Heart right ventricle (tissue), 16 donors: ENCODE measurements at regions of chr1 and their contacts with region 1.

Region 1: DNA sequence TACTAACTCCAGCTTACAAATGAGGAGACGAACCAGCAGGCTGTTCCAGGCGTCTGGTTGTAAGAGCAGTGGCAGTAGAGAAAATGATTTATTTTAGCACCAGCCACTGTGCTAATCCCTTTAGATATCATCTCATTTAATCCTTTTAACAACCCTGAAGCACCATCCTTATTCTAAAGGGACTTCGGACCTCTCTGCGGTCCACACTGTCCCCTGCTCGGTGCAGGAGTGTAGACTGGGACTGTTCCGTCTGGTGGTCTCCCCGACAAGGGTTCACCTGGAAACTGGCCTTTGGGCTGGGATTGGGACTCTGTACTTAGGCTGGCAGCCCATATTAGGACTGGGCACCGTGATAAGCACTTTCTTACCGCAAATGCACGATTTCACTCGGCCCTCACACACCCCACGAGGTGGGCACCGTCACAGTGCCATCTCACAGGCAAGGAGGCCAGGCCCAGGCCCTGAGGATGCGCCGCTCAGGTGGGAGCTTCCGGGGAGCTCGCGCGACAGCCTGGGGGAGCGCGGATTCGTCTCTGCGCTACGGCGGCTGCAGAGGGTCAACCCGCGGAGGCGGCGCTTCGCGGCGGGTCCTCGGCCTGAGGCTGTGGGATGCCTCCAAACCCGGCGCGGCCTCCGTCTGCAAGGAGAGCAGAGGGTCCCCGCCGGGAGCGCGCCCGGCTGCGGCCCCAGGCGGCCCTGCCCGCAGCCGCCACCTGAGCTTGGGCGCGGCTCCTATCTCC is 45.2 kb downstream of the ATP1A1 start:
- DNase-seq: peak; percentile 83 to 87
- ATAC-seq: peak; percentile 68 to 87 (median 78)
- H3K4me3 ChIP-seq: peak overlapping the region; percentile 57 to 90 (median 82)
- H3K27ac ChIP-seq: peak overlapping the region; percentile 28 to 92 (median 88)
- H3K4me1 ChIP-seq: peaks cover 5 to 47% (median 28%) of the 10 kb centered on the region in 9 donors
- H3K27me3 ChIP-seq: no peaks in the 10 kb centered on the region
- CTCF ChIP-seq: peak in 2 of 9 donors; percentile 5 to 11

Region 2: GRCh38 chr1:116151739-116152576 is 266.3 kb before region 1 on chr1:
- intact Hi-C with region 1: loop called in 1 of 10 experiments (anchors 5 kb)
- DNase-seq: peak; percentile 70 to 75
- ATAC-seq: peak; percentile 90 to 97 (median 96)
- H3K4me3 ChIP-seq: peak overlapping the region in 9 of 10 donors; percentile 42 to 60 (median 52)
- H3K27ac ChIP-seq: peak overlapping the region; percentile 43 to 85 (median 75)
- H3K4me1 ChIP-seq: peaks cover 5 to 30% (median 11%) of the 10 kb centered on the region in 9 donors
- H3K27me3 ChIP-seq: no peaks in the 10 kb centered on the region
- CTCF ChIP-seq: peak; percentile 87 to 99 (median 93)

Region 3: GRCh38 chr1:116377541-116378529 is 40.4 kb before region 1 on chr1:
- intact Hi-C with region 1: loop called in 7 of 10 experiments (anchors 5 kb)
- DNase-seq: peak; percentile 57 to 62
- ATAC-seq: peak in 7 of 8 donors; percentile 18 to 51 (median 47)
- H3K4me3 ChIP-seq: peak overlapping the region in 7 of 10 donors; percentile 3 to 88 (median 29)
- H3K27ac ChIP-seq: peak overlapping the region; percentile 91 to 98 (median 97)
- H3K4me1 ChIP-seq: peaks cover 28 to 92% (median 86%) of the 10 kb centered on the region in 9 donors
- H3K27me3 ChIP-seq: no peaks in the 10 kb centered on the region
- CTCF ChIP-seq: no peak

Region 4: DNA sequence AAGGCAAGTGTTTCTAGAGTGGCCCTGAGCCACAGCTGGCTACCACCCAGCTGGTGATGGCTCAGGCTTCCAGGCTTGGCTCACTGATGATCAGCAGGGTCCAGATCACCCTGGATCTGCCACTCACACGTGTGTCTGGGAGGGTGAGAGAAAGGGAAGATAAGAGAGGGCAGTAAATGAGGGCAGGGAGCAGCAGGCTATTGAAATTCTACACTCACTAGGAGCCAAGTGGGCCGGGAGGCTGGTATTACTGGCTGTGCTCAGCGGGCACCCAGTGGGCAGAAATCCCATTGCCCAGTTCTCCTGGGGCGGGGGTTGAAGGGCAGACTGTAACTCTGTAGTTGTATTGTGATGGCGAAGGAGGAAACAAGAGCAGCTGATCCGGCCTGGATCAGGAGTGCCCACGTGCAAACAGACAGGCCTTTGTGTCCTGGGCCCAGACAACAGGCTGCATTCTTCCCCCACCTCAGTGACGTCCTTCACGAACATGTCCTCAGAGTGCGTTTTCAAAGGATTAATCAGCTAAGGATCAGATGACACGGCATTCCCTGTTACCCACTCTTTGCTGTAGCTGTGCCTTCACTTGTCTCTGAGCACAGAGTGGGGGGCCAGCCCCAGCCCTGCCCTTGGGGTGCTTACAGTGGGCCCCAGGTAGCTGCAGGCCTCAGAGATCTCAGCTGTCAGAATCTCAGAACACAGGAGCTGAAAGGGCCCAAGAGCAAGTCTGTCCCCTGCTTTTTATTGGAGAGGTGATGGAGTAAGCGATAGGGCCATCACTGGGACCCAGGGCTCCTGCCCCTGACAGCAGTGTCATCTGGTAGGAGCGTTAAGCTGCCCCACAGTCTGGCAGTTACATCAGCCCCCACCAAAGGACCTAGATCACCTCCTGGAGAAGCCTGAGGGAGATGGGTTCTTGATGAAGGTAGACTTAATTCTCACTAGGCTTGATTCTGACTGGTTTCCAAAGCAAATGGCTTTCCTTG is 15.3 kb after region 1 on chr1:
- intact Hi-C with region 1: loop called in 1 of 10 experiments (anchors 1 kb)
- DNase-seq: peak; percentile 66 to 69
- ATAC-seq: peak; percentile 82 to 95 (median 88)
- H3K4me3 ChIP-seq: no peak overlapping the region
- H3K27ac ChIP-seq: peak overlapping the region; percentile 23 to 86 (median 74)
- H3K4me1 ChIP-seq: peaks cover 0 to 25% (median 12%) of the 10 kb centered on the region in 9 donors
- H3K27me3 ChIP-seq: no peaks in the 10 kb centered on the region
- CTCF ChIP-seq: no peak

Region 5: DNA sequence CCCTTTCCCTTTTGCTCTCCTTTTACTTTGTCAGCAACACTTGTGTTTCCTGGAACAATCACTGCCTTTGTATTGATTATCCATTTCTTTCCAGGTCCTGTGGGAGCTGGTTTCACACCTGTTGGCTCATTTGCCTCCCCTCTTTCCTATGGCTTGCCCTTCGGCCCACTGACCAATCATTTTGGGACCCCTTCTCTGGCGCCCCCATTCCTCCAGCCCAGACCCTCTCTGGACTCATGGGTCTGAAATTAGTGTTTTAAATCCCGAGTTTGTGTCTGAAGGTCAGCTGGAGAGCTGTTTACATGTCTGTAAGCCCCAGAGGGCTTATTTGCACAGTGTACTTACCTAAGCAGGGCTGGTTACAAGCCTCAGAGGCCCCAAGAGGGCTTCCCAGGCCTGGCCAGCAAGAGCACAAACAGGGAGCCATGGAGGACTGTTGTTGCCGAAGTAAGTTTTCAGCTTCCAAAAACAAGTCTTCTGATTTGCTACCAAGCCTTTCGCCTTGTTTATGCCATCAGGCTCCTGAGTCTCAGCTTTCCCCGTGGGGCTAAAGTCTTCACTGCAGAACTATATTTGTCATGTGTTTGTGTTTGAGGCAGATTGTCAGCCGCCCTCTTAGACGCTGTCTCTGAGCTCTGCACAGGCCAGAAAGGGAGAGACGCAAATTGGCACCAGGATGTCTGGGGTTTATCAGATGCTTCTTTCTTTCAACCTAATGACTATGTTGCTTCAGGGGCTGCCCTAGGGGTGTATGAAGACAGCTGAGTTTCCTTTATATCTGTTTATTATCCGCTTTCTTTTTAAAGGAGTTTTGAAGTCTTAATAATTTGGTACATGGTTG is 47.8 kb after region 1 on chr1:
- intact Hi-C with region 1: loop called in 1 of 10 experiments (anchors 5 kb)
- DNase-seq: no peak
- ATAC-seq: peak in 3 of 8 donors; percentile 30 to 55 (median 41)
- H3K4me3 ChIP-seq: no peak overlapping the region
- H3K27ac ChIP-seq: no peak overlapping the region
- H3K4me1 ChIP-seq: peaks cover 0 to 6% (median 0%) of the 10 kb centered on the region in 9 donors
- H3K27me3 ChIP-seq: no peaks in the 10 kb centered on the region
- CTCF ChIP-seq: no peak

Region 6: GRCh38 chr1:116474921-116475849 is 56.9 kb after region 1 on chr1:
- intact Hi-C with region 1: loop called in 4 of 10 experiments (anchors 2 to 10 kb)
- DNase-seq: peak; percentile 51 to 63
- ATAC-seq: peak; percentile 70 to 88 (median 85)
- H3K4me3 ChIP-seq: no peak overlapping the region
- H3K27ac ChIP-seq: peak overlapping the region; percentile 38 to 94 (median 90)
- H3K4me1 ChIP-seq: peaks cover 6 to 40% (median 32%) of the 10 kb centered on the region in 9 donors
- H3K27me3 ChIP-seq: no peaks in the 10 kb centered on the region
- CTCF ChIP-seq: no peak